Common myeloid progenitor, CD34-positive (primary cell): ENCODE measurements at regions of chr2 and their contacts with region 1.

Region 1: GRCh38 chr2:172113617-172114016 is 10.9 kb upstream of the DLX2 start:
- DNase-seq: peak in 1 of 3 donors; percentile 57
- H3K4me3 ChIP-seq: no peak overlapping the region
- H3K27ac ChIP-seq: no peak overlapping the region
- H3K4me1 ChIP-seq: peaks cover 0 to 12% (median 5%) of the 10 kb centered on the region in 4 experiments
- H3K27me3 ChIP-seq: peaks cover 0 to 32% (median 10%) of the 10 kb centered on the region in 5 experiments

Region 2: DNA sequence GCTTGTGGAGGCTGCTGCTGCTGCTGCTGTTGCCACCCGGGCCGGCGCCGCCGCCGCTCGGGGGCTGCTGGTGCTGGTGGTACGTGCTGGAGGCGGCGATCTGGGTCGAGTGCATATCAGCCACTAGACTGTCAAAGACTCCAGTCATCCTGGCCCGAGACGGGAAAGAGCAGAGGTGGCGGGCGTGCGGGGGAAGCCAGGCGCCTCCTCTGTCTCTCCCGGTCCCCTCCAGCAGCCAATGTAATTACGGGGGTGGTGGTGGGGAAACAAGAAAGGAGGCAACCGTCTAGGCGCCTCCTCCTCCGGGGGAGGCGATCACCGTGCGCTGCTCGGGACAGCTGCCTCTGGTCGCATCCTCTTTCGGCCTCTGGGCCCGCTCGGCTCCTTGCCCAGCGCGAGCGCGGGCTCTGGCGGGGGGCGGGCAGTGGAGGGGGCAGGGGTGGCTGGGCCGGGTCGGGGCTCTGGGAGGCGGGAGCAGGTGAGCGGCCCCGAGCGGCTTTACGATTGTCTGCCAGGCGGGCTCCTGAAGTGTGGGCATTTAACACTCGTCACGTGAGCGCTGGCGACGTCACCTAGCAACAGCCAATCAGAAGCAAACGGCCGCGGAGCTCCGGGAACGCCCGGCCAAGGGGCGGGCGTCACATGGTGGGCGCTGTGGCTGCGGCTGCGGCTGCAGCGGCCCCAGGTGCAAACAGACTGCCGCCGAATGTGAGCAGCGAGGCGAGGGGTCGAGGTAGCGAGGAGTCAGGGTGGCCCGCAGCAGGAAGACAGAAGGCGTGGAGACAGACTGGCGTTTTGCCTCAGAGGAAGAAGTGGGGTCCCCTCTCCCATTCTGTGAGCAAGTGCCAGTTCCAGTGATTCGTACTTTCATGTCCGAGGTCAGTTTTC is 11.0 kb before region 1 on chr2 and contains the start of gene DLX2:
- CTCF ChIA-PET with region 1: interaction called, 11 read pairs
- POLR2A ChIA-PET with region 1: no interaction called
- DNase-seq: peak; percentile 82 to 86 (median 83)
- H3K4me3 ChIP-seq: peak within 1 kb of the TSS in 6 of 7 experiments; percentile 29 to 74 (median 64)
- H3K27ac ChIP-seq: no peak within 1 kb of the TSS
- H3K4me1 ChIP-seq: peaks cover 8 to 63% (median 62%) of the 10 kb centered on the region in 4 experiments
- H3K27me3 ChIP-seq: peaks cover 18 to 100% (median 62%) of the 10 kb centered on the region in 5 experiments

Region 3: GRCh38 chr2:172128484-172128883 is 14.9 kb after region 1 on chr2:
- CTCF ChIA-PET with region 1: interaction called, 12 read pairs
- POLR2A ChIA-PET with region 1: no interaction called
- DNase-seq: no peak
- H3K4me3 ChIP-seq: no peak overlapping the region
- H3K27ac ChIP-seq: no peak overlapping the region
- H3K4me1 ChIP-seq: no peaks in the 10 kb centered on the region
- H3K27me3 ChIP-seq: no peaks in the 10 kb centered on the region

Region 4: GRCh38 chr2:172162739-172163336 is 49.2 kb after region 1 on chr2:
- CTCF ChIA-PET with region 1: no interaction called
- POLR2A ChIA-PET with region 1: no interaction called
- DNase-seq: no peak
- H3K4me3 ChIP-seq: no peak overlapping the region
- H3K27ac ChIP-seq: no peak overlapping the region
- H3K4me1 ChIP-seq: no peaks in the 10 kb centered on the region
- H3K27me3 ChIP-seq: no peaks in the 10 kb centered on the region